Aorta (tissue), 5 donors: ENCODE measurements at regions of chr5 and their contacts with region 1.

Region 1: GRCh38 chr5:54249210-54250028 is 61.0 kb downstream of the ARL15 start:
- DNase-seq: peak in 1 of 2 donors; percentile 48
- ATAC-seq: no peak
- H3K4me3 ChIP-seq: no peak overlapping the region
- H3K27ac ChIP-seq: no peak overlapping the region
- H3K4me1 ChIP-seq: no peaks in the 10 kb centered on the region
- H3K27me3 ChIP-seq: no peaks in the 10 kb centered on the region

Region 2: GRCh38 chr5:53362521-53362941 is 886.9 kb before region 1 on chr5:
- intact Hi-C with region 1: no loop called
- DNase-seq: peak in 1 of 2 donors; percentile 62
- ATAC-seq: peak; percentile 65
- H3K4me3 ChIP-seq: no peak overlapping the region
- H3K27ac ChIP-seq: peak overlapping the region in 1 of 2 donors; percentile 16
- H3K4me1 ChIP-seq: peaks cover 2 to 5% of the 10 kb centered on the region in 2 donors
- H3K27me3 ChIP-seq: no peaks in the 10 kb centered on the region

Region 3: DNA sequence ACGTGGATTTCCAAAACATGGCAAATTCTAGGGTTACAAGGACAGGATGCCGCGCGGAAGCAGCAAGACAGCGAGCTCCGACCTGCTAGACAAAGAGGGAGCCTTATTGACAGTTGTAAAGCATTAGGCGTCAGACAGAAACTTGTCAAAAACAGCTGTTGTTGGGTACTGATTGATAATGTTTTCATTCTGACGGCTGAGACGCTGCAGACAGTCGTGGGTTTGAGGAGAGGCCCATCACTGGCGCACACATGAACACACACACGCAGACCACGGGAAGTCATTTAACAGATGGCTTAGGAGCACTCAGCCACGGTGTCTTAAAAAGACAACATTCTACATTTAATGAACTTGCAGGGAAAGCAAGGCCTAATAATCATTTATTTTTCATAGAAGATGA is 365.0 kb before region 1 on chr5:
- intact Hi-C with region 1: no loop called
- DNase-seq: no peak
- ATAC-seq: no peak
- H3K4me3 ChIP-seq: no peak overlapping the region
- H3K27ac ChIP-seq: no peak overlapping the region
- H3K4me1 ChIP-seq: no peaks in the 10 kb centered on the region
- H3K27me3 ChIP-seq: peaks cover 0 to 2% of the 10 kb centered on the region in 2 donors

Region 4: DNA sequence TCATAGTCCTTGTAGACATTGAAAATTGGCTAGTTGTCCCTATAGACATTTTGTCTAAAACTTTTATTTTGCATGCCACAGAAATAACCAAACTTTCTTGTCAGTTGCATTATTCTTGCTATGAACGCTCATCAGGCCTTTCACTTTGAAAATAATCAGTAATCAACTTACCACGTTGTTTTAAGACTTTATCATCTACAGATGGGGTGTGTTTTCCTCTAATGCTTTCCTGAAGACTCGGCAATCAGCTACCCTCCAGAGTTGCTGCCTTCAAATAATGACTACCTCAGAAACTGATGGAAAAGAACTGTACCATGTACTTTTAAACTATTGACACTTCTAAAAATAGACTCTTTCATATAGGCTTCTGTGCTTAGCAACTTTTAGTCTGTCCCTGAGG is 172.6 kb after region 1 on chr5:
- intact Hi-C with region 1: loop called in 1 of 2 experiments (anchors 5 kb)
- DNase-seq: no peak
- ATAC-seq: no peak
- H3K4me3 ChIP-seq: no peak overlapping the region
- H3K27ac ChIP-seq: no peak overlapping the region
- H3K4me1 ChIP-seq: no peaks in the 10 kb centered on the region
- H3K27me3 ChIP-seq: no peaks in the 10 kb centered on the region